Endothelial cell of umbilical vein (primary cell): ENCODE measurements at regions of chr15 and their contacts with region 1.

Region 1: GRCh38 chr15:99076552-99077308 is 28.1 kb upstream of the SYNM start:
- DNase-seq: peak; percentile 73
- H3K4me3 ChIP-seq: peak overlapping the region; percentile 6 to 50 (median 8)
- H3K27ac ChIP-seq: no peak overlapping the region
- H3K4me1 ChIP-seq: peaks cover 2% of the 10 kb centered on the region
- H3K27me3 ChIP-seq: peaks cover 0 to 2% of the 10 kb centered on the region in 2 experiments
- CTCF ChIP-seq: peak; percentile 71 to 83
- POLR2A ChIP-seq: no peak

Region 2: GRCh38 chr15:98442379-98442833 is 634.3 kb before region 1 on chr15:
- CTCF ChIA-PET with region 1: interaction called, 24 read pairs
- POLR2A ChIA-PET with region 1: no interaction called
- dilution Hi-C with region 1: no loop called
- intact Hi-C with region 1: loop called (anchors 1 kb)
- DNase-seq: peak; percentile 71
- H3K4me3 ChIP-seq: no peak overlapping the region
- H3K27ac ChIP-seq: no peak overlapping the region
- H3K4me1 ChIP-seq: no peaks in the 10 kb centered on the region
- H3K27me3 ChIP-seq: no peaks in the 10 kb centered on the region
- CTCF ChIP-seq: peak; percentile 72 to 80
- POLR2A ChIP-seq: no peak

Region 3: DNA sequence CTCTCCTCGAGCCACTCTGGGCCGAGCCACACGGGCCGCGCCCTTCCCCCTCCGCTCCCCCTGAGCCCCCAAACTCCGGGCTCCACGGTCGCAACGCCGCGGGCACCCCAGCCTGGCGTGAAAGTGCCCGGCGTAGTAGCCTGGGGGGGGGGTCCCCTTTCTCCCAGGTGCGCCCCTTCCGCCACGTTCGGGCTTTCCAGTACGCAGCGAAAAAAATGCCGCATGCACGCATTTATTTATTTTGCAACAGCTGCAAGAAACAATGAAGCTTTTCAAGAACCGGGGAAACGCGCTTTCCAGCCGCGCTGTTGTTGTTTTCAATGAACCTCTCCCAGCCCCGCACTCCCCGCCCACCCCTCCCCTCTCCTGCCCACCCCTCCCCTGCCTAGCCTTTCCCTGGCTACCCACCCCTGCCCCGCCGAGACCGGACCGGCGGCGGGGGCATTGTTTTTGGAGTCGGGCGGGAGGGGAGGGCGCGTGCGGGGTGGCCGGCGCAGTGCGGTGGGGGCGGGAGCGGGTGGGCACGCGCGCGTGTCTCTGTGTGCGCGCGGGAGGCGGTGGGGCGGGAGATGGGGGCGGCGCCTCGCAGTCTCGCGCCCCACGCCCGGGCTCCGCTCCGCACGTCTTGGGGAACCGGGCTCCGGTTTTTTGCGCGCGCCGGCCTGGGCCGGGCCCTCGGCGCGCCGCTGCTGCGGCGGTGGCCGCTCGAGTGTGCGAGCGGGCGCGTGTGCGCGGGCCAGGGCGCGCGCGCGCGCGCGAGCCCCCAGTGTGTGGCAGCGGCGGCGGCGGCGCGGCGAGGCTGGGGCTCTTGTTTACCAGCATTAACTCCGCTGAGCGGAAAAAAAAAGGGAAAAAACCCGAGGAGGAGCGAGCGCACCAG is 428.7 kb before region 1 on chr15 and contains the start of gene IGF1R:
- CTCF ChIA-PET with region 1: interaction called, 22 read pairs
- POLR2A ChIA-PET with region 1: no interaction called
- dilution Hi-C with region 1: no loop called
- intact Hi-C with region 1: loop called (anchors 1 kb)
- DNase-seq: peak; percentile 85
- H3K4me3 ChIP-seq: peak within 1 kb of the TSS; percentile 67 to 96 (median 75)
- H3K27ac ChIP-seq: peak within 1 kb of the TSS; percentile 62
- H3K4me1 ChIP-seq: peaks cover 12% of the 10 kb centered on the region
- H3K27me3 ChIP-seq: peaks cover 9 to 21% of the 10 kb centered on the region in 2 experiments
- CTCF ChIP-seq: peak in 1 of 2 donors; percentile 0
- POLR2A ChIP-seq: no peak
- total RNA-seq, gene IGF1R: 50.9 and 59.1 TPM in 2 replicates

Region 4: GRCh38 chr15:98850961-98851573 is 225.7 kb before region 1 on chr15:
- CTCF ChIA-PET with region 1: interaction called, 28 read pairs
- POLR2A ChIA-PET with region 1: no interaction called
- dilution Hi-C with region 1: no loop called
- intact Hi-C with region 1: no loop called
- DNase-seq: peak; percentile 78
- H3K4me3 ChIP-seq: no peak overlapping the region
- H3K27ac ChIP-seq: no peak overlapping the region
- H3K4me1 ChIP-seq: peaks cover 22% of the 10 kb centered on the region
- H3K27me3 ChIP-seq: no peaks in the 10 kb centered on the region
- CTCF ChIP-seq: peak; percentile 81 to 86
- POLR2A ChIP-seq: no peak

Region 5: GRCh38 chr15:99042892-99043291 is 33.8 kb before region 1 on chr15:
- CTCF ChIA-PET with region 1: interaction called, 12 read pairs
- POLR2A ChIA-PET with region 1: no interaction called
- dilution Hi-C with region 1: no loop called
- intact Hi-C with region 1: no loop called
- DNase-seq: no peak
- H3K4me3 ChIP-seq: no peak overlapping the region
- H3K27ac ChIP-seq: no peak overlapping the region
- H3K4me1 ChIP-seq: no peaks in the 10 kb centered on the region
- H3K27me3 ChIP-seq: peaks cover 7 to 10% of the 10 kb centered on the region in 2 experiments
- CTCF ChIP-seq: no peak
- POLR2A ChIP-seq: no peak

Region 6: DNA sequence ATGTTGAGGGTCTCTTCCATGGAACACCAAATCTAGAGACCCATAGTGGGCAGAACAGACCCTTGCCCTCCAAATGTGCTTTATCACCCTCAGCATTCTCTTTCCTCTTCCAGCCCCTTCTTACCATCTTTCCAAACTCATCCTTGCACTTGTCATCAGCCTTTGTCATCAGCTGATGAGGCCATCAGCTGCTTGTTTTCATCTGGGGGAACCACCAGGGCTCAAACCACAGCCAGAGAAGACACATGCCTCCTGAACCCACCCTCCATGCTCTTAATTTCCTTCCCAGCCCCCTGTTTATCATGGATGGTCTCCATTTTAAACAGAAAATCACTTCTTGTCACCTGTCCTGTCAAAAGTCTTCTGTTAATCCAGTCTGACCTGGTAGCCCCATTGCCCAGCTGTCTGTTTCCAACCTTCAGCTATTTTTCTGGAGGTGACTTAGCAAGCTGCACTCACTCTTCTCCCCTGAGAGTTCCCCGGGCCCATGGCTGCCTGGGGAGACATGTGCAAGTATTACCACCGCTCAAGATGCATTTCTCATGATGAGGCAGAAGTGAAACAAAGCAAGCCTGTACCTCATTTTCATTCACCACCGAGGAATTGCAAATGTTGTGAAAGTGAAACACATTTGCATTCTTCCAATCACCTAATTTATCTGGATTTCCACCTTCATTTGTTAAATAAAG is 13.4 kb after region 1 on chr15:
- CTCF ChIA-PET with region 1: interaction called, 16 read pairs
- POLR2A ChIA-PET with region 1: no interaction called
- dilution Hi-C with region 1: no loop called
- intact Hi-C with region 1: no loop called
- DNase-seq: no peak
- H3K4me3 ChIP-seq: no peak overlapping the region
- H3K27ac ChIP-seq: no peak overlapping the region
- H3K4me1 ChIP-seq: no peaks in the 10 kb centered on the region
- H3K27me3 ChIP-seq: no peaks in the 10 kb centered on the region
- CTCF ChIP-seq: no peak
- POLR2A ChIP-seq: no peak